GM13977 (cell line): ENCODE measurements at regions of chr4 and their contacts with region 1.

Region 1: GRCh38 chr4:176340871-176341685 is 21.3 kb downstream of the SPCS3 start:
- DNase-seq: peak; percentile 41
- CTCF ChIP-seq: peak; percentile 55

Region 2: DNA sequence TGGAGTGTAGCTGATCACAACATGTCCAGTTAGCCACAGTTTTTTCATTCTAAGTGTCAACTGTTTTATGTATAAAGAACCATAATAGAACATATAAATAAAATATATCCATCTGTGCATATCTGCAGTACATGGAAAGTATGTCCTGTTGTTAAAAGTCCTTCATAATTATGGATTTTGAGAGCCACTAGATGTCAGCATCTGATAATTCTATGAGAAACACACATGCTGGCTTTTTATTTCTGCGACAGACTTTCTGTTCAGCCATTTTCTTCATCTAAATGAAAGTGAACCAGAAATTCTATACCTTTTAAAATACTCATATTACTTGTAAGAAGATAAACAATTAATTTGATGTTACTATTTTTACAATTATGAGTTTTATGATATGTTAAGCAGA is 780.5 kb before region 1 on chr4:
- in situ Hi-C with region 1: loop called (anchors 25 kb)
- DNase-seq: peak; percentile 39
- CTCF ChIP-seq: peak; percentile 22

Region 3: GRCh38 chr4:175947117-175947722 is 393.9 kb before region 1 on chr4:
- in situ Hi-C with region 1: loop called (anchors 10 kb)
- DNase-seq: no peak
- CTCF ChIP-seq: peak; percentile 59

Region 4: DNA sequence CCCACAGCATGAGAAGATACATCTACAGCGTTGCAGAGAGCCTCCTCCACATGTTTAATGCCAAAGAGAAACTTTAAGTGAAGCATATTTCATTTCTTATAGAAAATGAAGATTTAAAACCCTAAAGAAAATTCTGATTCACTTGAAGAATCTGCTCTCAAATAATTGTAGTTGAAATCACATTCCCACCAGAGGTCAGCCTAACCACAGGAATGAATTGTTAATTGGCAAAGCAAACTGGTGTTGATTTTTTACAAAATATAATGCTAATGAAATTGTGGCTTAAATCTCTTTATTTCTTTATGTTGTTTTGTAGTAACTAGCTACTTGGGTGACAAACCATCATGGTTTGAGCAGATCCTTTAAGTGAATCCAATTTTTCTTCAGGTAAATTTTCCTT is 306.6 kb before region 1 on chr4:
- in situ Hi-C with region 1: loop called (anchors 25 kb)
- DNase-seq: no peak
- CTCF ChIP-seq: peak; percentile 21

Region 5: GRCh38 chr4:177128306-177128705 is 787.2 kb after region 1 on chr4:
- in situ Hi-C with region 1: no loop called
- DNase-seq: no peak
- CTCF ChIP-seq: no peak